ENCODE measurements at regions of chr6 and their contacts with region 1.

Region 1: DNA sequence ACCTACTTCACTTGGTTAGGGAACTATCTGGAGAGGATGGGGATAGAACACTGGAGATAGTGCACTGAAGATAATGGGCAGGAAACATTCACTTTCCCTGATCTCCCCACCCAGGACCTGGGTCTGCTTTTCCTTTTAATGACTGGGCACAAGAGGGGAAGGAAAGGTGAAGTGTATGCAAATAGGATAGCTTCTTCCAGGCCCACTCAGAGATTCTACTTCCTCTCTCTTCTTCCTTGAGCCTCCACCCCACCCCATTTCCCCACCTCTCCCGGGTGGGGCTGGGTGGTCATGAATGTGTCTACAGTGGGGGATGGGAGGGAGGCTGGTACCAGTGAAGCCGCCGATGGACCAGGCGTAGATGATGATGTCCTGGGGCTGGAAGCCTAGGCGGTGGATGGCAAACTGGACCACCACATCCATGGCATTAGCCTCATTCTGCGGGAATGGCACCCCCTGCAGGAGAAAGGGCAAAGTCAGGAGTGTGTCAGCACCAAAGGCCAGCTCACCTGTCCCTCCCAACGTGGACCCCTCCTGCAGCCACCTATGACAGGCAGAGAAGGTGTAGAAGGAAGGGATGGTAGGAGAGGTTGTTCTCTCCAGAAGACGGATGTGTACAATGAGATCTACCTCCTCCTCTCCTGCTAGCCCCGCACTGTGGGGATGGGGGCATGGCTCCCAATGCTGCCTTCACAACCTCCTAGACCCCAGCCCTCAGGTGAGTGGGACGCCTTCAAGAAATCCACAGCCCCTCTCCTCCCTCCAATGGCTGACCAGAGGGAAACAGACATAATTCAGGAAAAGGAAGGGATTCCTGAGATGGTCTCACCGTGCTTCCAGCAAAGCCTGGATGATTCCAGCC is 8.6 kb upstream of the LY6G5C start:
- DNase-seq: peak in 1 of 2 experiments; percentile 81
- H3K4me3 ChIP-seq: no peak overlapping the region
- H3K27ac ChIP-seq: no peak overlapping the region
- H3K4me1 ChIP-seq: peaks cover 0 to 1% (median 0%) of the 10 kb centered on the region in 4 experiments; a peak in 2 of 7 replicates
- H3K27me3 ChIP-seq: no peaks in the 10 kb centered on the region; a peak in 1 of 7 replicates
- CTCF ChIP-seq: peak; percentile 58 to 88 (median 83)
- EP300 ChIP-seq: no peak
- POLR2A ChIP-seq: no peak
- RAD21 ChIP-seq: peak; percentile 50 to 61

Region 2: GRCh38 chr6:31665501-31666336 is 23.8 kb before region 1 on chr6 and contains the start of gene CSNK2B:
- CTCF ChIA-PET with region 1: interaction called, 26 read pairs
- POLR2A ChIA-PET with region 1: interaction called, 11 read pairs
- DNase-seq: peak; percentile 88 to 91
- H3K4me3 ChIP-seq: peak within 1 kb of the TSS; percentile 88 to 94 (median 91)
- H3K27ac ChIP-seq: peak within 1 kb of the TSS; percentile 97
- H3K4me1 ChIP-seq: peaks cover 0 to 12% (median 4%) of the 10 kb centered on the region in 4 experiments; a peak in 5 of 7 replicates
- H3K27me3 ChIP-seq: no peaks in the 10 kb centered on the region
- CTCF ChIP-seq: no peak
- EP300 ChIP-seq: no peak
- POLR2A ChIP-seq: peak in 1 of 2 experiments; percentile 95; a peak in 2 of 3 replicates
- RAD21 ChIP-seq: no peak
- total RNA-seq, gene CSNK2B: 192 and 208 TPM in 2 replicates

Region 3: GRCh38 chr6:31712296-31712695 is 22.8 kb after region 1 on chr6:
- CTCF ChIA-PET with region 1: interaction called, 12 read pairs
- POLR2A ChIA-PET with region 1: interaction called, 4 read pairs
- DNase-seq: no peak
- H3K4me3 ChIP-seq: no peak overlapping the region
- H3K27ac ChIP-seq: no peak overlapping the region
- H3K4me1 ChIP-seq: peaks cover 11 to 18% (median 13%) of the 10 kb centered on the region in 4 experiments
- H3K27me3 ChIP-seq: no peaks in the 10 kb centered on the region; a peak in 1 of 7 replicates
- CTCF ChIP-seq: no peak
- EP300 ChIP-seq: no peak
- POLR2A ChIP-seq: no peak
- RAD21 ChIP-seq: no peak

Region 4: GRCh38 chr6:31769684-31770371 is 80.3 kb after region 1 on chr6:
- CTCF ChIA-PET with region 1: interaction called, 16 read pairs
- POLR2A ChIA-PET with region 1: interaction called, 3 read pairs
- DNase-seq: peak; percentile 63 to 96
- H3K4me3 ChIP-seq: no peak overlapping the region
- H3K27ac ChIP-seq: no peak overlapping the region
- H3K4me1 ChIP-seq: peaks cover 0 to 5% (median under 1%) of the 10 kb centered on the region in 4 experiments; a peak in 4 of 7 replicates
- H3K27me3 ChIP-seq: no peaks in the 10 kb centered on the region
- CTCF ChIP-seq: peak in 2 of 3 experiments; percentile 85 to 95; a peak in 3 of 4 replicates
- EP300 ChIP-seq: no peak
- POLR2A ChIP-seq: no peak
- RAD21 ChIP-seq: peak; percentile 73 to 75

Measured in H1 (cell line).